Aorta (tissue), 5 donors: ENCODE measurements at regions of chr12 and their contacts with region 1.

Region 1: DNA sequence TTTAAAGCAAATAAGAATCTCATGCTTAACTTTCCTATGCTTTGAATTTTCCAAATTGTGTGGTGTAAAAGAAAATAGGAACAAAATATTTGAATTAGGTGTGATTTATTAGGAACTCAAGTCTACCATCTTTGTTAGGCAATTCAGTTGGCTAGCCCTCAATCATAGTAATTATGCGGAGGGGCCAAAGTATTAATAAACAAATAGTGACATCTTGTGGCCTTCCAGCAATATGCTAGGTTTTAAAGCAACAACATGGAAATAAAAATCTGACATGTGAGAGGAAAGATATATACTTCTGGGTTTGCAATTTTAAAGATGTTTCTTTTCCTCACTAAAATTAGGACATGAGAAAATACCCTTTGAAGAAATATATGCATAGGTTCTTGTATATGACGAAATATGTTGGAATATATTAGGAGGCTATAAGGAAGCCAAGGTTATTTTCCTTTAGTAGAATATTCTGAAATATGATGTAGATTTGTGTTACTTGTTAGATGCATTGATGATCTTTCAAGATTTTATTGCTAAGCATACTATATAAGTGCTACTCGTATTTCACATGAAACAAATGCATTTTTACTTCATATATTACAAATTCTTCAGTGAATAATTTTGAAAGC is 200.4 kb downstream of the PTPRO start:
- DNase-seq: no peak
- ATAC-seq: peak; percentile 74
- H3K4me3 ChIP-seq: no peak overlapping the region
- H3K27ac ChIP-seq: no peak overlapping the region
- H3K4me1 ChIP-seq: no peaks in the 10 kb centered on the region
- H3K27me3 ChIP-seq: no peaks in the 10 kb centered on the region

Region 2: DNA sequence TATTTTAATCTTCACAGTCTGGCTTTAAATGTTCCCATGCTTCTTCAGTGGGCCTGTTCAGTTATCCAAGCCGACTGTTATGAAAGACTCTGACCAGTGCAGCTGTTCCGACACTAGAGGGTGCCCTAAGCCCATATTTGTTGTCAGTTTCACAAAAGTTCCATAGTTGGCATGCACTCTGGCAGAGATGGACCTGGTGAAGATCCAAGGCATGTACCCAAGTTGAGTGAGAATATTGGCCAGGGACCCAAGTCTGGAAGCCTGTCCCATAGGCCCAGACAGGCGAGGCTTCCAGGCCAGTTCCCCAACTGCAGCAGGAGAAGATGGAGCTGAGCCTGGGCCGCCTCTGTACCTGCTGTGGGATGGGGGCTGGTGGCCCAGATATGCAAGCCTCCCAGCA is 798.9 kb before region 1 on chr12:
- intact Hi-C with region 1: loop called in 1 of 2 experiments (anchors 10 kb)
- DNase-seq: no peak
- ATAC-seq: peak; percentile 83
- H3K4me3 ChIP-seq: no peak overlapping the region
- H3K27ac ChIP-seq: no peak overlapping the region
- H3K4me1 ChIP-seq: no peaks in the 10 kb centered on the region
- H3K27me3 ChIP-seq: no peaks in the 10 kb centered on the region

Region 3: GRCh38 chr12:15151161-15152120 is 371.2 kb before region 1 on chr12:
- intact Hi-C with region 1: loop called in 1 of 2 experiments (anchors 10 kb)
- DNase-seq: no peak
- ATAC-seq: peak; percentile 83
- H3K4me3 ChIP-seq: no peak overlapping the region
- H3K27ac ChIP-seq: peak overlapping the region in 1 of 2 donors; percentile 96
- H3K4me1 ChIP-seq: peaks cover 7 to 9% of the 10 kb centered on the region in 2 donors
- H3K27me3 ChIP-seq: no peaks in the 10 kb centered on the region

Region 4: GRCh38 chr12:15227004-15227679 is 295.5 kb before region 1 on chr12:
- intact Hi-C with region 1: loop called in 1 of 2 experiments (anchors 5 kb)
- DNase-seq: peak; percentile 71 to 80
- ATAC-seq: peak; percentile 70
- H3K4me3 ChIP-seq: no peak overlapping the region
- H3K27ac ChIP-seq: no peak overlapping the region
- H3K4me1 ChIP-seq: peaks cover 0 to 4% of the 10 kb centered on the region in 2 donors
- H3K27me3 ChIP-seq: no peaks in the 10 kb centered on the region

Region 5: DNA sequence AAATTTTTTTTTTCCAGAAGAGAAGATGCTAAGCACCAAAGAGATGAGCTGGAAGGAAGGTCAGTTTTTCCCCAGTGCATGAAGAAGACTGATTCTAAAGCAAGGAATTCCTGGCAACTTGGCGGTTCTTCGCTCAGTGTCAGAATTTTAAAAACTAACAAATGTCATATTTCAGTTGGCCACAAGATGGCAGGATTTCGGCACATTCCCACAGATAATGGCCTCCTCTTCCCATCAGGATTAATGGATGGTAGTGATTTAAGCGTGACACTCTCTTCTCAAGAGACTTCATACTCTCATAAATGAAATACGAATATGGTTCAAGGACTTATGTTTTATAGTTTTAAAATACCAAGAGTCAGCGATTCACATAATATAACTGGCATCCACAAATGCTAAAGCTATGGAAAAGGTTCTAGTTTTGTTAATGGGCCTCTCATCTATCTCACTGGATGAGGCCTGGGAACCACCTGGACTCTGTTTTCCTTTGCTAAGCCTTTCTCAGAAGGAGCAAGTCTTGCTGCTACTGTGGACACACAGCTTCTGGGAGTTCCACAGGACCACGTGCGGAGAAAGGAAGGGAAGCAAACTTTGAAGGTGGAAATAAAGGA is 246.5 kb before region 1 on chr12:
- intact Hi-C with region 1: loop called (anchors 1 to 2 kb)
- DNase-seq: no peak
- ATAC-seq: peak; percentile 58
- H3K4me3 ChIP-seq: no peak overlapping the region
- H3K27ac ChIP-seq: peak overlapping the region in 1 of 2 donors; percentile 33
- H3K4me1 ChIP-seq: peaks cover 3% of the 10 kb centered on the region in 2 donors
- H3K27me3 ChIP-seq: no peaks in the 10 kb centered on the region

Region 6: DNA sequence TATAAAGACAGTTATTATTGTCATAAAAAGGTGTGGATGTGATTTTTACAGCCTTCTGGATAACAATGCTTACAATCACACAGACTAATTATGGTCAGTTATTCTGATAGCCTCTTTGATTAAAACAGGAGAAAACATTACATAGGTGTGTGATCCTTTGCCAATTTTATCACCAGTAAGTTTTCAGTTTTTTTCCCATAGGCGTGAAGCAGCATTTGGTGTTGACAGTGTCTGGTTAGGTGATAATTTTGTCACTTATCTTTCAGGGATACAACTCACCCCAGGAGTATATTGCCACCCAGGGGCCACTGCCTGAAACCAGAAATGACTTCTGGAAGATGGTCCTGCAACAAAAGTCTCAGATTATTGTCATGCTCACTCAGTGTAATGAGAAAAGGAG is 57.8 kb after region 1 on chr12:
- intact Hi-C with region 1: no loop called
- DNase-seq: no peak
- ATAC-seq: no peak
- H3K4me3 ChIP-seq: no peak overlapping the region
- H3K27ac ChIP-seq: no peak overlapping the region
- H3K4me1 ChIP-seq: no peaks in the 10 kb centered on the region
- H3K27me3 ChIP-seq: no peaks in the 10 kb centered on the region

Region 7: DNA sequence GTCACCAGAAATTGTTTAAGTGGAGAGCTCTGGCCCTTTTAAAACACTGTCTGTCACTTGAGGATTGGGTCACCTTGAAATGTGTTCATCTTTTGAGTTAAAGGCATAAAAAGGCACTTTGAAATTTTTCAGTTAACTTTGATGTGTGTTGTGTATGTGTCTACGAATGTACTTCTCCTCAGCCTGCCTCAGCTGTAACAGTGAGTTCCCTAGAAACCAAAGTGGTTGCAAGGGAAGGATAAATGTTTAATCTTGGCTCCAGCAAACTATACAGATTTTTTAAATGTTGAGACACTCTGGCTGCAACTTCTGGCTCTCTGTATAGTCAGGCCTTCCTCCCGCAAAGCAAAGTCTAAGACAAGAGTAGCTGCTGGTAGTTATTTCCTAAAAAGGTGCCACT is 396.7 kb after region 1 on chr12:
- intact Hi-C with region 1: no loop called
- DNase-seq: no peak
- ATAC-seq: no peak
- H3K4me3 ChIP-seq: no peak overlapping the region
- H3K27ac ChIP-seq: no peak overlapping the region
- H3K4me1 ChIP-seq: peaks cover 0 to 3% of the 10 kb centered on the region in 2 donors
- H3K27me3 ChIP-seq: no peaks in the 10 kb centered on the region